ENCODE measurements at regions of chr19 and their contacts with region 1.

Region 1: DNA sequence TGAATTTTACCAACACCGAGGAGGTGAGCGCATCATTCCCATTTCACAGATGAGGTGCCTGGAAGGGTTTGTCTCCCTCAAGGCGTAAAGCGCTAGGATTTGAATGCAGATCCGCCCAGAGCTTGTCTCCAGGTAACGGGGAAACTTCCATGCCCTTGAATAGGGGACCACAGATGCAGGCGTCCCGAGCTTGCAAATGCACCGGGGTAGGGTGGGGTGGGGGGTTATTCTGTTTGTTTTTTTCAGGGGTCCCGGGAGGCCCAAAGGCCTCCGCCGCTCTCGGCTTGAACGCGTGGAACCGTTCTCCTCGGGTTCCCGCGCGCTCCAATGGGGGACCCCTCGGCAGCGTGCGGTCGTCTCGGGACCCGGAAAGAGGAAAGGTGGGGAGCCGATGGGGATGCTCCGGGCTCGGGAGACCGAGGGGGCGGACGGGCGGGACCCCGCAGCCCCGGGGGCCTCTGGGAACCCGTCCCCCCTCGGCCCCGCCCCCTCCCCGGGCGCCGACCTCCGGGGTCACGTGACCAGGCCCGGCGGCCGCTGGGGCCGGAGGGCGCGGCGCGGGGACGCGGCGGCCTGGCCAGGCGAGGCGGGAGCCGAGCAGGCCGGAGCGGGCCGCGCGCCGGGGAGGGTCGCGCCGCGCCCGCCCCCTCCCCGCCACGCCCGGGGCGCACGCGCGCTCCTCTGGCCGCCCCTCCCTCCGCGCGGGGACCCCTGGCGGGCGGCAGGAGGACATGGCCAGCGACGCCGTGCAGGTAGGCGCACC is at the start of gene PKN1:
- DNase-seq: peak; percentile 69
- H3K4me3 Mint-ChIP-seq: peak within 1 kb of the TSS; percentile 79
- H3K27ac Mint-ChIP-seq: peak within 1 kb of the TSS; percentile 84
- H3K4me1 Mint-ChIP-seq: peaks cover 43% of the 10 kb centered on the region
- H3K27me3 Mint-ChIP-seq: peaks cover 36% of the 10 kb centered on the region

Region 2: DNA sequence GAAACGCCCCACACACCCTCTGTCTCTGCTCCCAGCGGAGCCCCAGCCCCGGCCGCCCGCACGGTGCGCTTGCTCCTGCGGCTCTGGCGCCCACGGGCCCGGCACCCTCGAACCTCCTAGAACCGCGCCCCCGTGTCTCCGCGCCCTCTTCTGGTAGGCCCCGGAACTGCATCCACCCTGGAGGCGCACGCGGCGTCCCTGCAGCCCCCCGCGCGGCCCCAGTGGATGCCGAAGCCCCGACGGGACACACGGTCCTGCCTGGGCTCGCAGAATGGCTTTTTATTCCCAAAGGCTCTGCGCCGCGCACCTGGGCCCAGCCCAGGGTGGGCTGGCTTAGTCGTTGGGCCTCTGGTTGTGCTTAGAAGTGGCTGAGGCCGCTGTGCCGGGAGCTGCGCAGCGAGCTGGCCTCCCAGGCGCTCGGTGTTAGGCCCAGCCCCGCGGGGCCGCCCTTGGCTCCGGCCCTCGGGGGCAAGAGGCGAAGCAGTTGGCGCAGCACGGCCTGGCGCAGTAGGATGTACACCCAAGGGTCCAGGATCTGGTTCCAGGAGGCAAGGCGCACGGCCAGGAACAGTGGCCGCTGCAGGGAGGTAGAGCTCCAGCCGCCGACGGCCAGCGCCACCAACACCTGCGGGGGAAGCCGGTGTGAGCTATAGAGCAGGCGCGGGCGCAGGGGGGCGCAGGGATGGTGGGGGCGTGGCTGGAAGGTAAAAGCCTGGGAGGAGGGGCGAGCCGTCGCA is 39.4 kb after region 1 on chr19:
- CTCF ChIA-PET with region 1: interaction called, 31 read pairs
- DNase-seq: peak; percentile 87
- H3K4me3 Mint-ChIP-seq: no peak overlapping the region
- H3K27ac Mint-ChIP-seq: no peak overlapping the region
- H3K4me1 Mint-ChIP-seq: peaks cover 39% of the 10 kb centered on the region
- H3K27me3 Mint-ChIP-seq: peaks cover 49% of the 10 kb centered on the region

Region 3: GRCh38 chr19:14517840-14518505 is 85.0 kb after region 1 on chr19 and contains the start of gene DNAJB1:
- CTCF ChIA-PET with region 1: no interaction called
- DNase-seq: peak; percentile 75
- H3K4me3 Mint-ChIP-seq: peak within 1 kb of the TSS; percentile 93
- H3K27ac Mint-ChIP-seq: peak within 1 kb of the TSS; percentile 97
- H3K4me1 Mint-ChIP-seq: peaks cover 69% of the 10 kb centered on the region
- H3K27me3 Mint-ChIP-seq: no peaks in the 10 kb centered on the region